ENCODE measurements at regions of chr3 and their contacts with region 1.

Region 1: GRCh38 chr3:4711689-4711992 is 218.5 kb downstream of the ITPR1 start:
- DNase-seq: no peak
- ATAC-seq: no peak
- H3K4me3 ChIP-seq: no peak overlapping the region
- H3K4me3 Mint-ChIP-seq: no peak overlapping the region
- H3K27ac ChIP-seq: no peak overlapping the region
- H3K27ac Mint-ChIP-seq: peak overlapping the region in 1 of 2 donors; percentile 10
- H3K4me1 ChIP-seq: no peaks in the 10 kb centered on the region
- H3K4me1 Mint-ChIP-seq: peaks cover 3 to 7% of the 10 kb centered on the region in 2 donors
- H3K27me3 ChIP-seq: no peaks in the 10 kb centered on the region
- H3K27me3 Mint-ChIP-seq: no peaks in the 10 kb centered on the region
- CTCF ChIP-seq: peak; percentile 23

Region 2: GRCh38 chr3:4687167-4687566 is 24.5 kb before region 1 on chr3:
- intact Hi-C with region 1: no loop called
- DNase-seq: no peak
- ATAC-seq: no peak
- H3K4me3 ChIP-seq: no peak overlapping the region
- H3K4me3 Mint-ChIP-seq: no peak overlapping the region
- H3K27ac ChIP-seq: no peak overlapping the region
- H3K27ac Mint-ChIP-seq: no peak overlapping the region
- H3K4me1 ChIP-seq: peaks cover 16% of the 10 kb centered on the region
- H3K4me1 Mint-ChIP-seq: peaks cover 14 to 26% of the 10 kb centered on the region in 2 donors
- H3K27me3 ChIP-seq: no peaks in the 10 kb centered on the region
- H3K27me3 Mint-ChIP-seq: no peaks in the 10 kb centered on the region
- CTCF ChIP-seq: no peak

Region 3: DNA sequence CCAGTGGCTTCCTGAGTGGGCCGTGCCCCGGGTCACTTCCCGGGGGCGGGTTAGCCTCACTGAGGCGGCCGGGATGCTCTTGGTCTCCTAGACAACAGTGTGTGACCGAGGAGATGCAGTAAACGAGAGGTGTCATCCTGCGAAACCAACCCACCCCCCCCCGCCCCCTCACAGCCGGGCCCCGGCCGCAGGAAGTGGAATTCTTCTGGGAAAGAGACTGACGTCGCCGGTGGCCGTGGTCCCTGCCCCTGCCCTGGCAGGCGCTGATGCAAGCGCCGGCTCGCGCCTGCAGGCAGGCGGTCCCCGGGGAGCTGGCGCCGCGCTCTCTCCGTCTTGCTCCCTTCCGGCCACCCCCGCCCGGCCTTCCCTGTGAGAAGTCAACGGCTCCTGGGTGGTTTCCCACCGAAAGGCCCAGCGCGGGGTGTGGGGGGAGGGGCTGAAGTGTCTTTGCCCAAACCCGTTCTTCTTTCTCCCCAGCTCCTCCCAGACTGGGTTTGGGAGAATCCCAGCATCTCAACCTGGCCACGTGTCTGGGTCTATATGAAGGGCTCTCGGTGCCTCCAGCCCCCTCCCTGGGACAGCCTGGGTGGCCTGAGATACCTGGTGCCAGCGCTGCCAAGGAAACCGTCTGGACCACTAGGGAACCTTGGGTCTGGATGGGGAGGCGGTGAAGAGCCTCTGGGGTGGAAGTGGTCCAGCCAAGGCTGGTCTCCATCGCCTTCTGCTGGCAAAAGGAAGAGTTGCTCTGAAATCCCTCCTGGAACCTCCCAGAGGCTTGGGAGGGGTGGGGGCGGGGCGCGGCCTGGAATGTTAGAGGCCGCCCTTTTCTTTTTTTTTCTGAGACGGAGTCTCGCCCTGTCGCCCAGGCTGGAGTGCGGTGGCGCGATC is 314.9 kb after region 1 on chr3:
- intact Hi-C with region 1: loop called (anchors 1 kb)
- DNase-seq: peak; percentile 73 to 82
- ATAC-seq: peak; percentile 79 to 91 (median 86)
- H3K4me3 ChIP-seq: peak overlapping the region; percentile 75
- H3K4me3 Mint-ChIP-seq: peak overlapping the region; percentile 89
- H3K27ac ChIP-seq: peak overlapping the region; percentile 84
- H3K27ac Mint-ChIP-seq: peak overlapping the region; percentile 86 to 92
- H3K4me1 ChIP-seq: peaks cover 17% of the 10 kb centered on the region
- H3K4me1 Mint-ChIP-seq: peaks cover 9 to 15% of the 10 kb centered on the region in 2 donors
- H3K27me3 ChIP-seq: no peaks in the 10 kb centered on the region
- H3K27me3 Mint-ChIP-seq: peaks cover 0 to 2% of the 10 kb centered on the region in 2 donors
- CTCF ChIP-seq: peak; percentile 61

Region 4: DNA sequence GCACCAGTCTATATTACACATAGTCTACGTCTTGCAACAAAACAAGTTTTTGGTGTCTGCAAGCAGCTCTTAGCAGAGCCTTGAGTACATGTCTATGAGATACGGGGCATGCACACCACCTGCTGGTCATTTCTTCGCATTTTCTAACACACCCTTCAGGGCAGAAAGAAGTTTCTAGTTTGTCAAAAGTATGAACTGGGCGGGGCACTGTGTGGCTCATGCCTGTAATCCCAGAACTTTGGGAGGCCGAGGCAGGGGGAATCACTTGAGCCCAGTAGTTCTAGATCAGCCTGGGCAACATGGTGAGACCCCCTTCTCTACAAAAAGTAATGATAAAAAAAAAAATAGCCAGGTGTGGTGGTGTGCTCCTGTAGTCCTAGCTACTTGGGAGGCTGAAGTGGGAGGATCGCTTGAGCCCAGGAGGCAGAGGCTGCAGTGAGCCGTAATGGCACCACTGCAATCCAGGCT is 346.2 kb after region 1 on chr3:
- intact Hi-C with region 1: loop called (anchors 1 kb)
- DNase-seq: peak; percentile 58 to 89
- ATAC-seq: peak; percentile 95 to 98 (median 96)
- H3K4me3 ChIP-seq: no peak overlapping the region
- H3K4me3 Mint-ChIP-seq: no peak overlapping the region
- H3K27ac ChIP-seq: no peak overlapping the region
- H3K27ac Mint-ChIP-seq: no peak overlapping the region
- H3K4me1 ChIP-seq: peaks cover 32% of the 10 kb centered on the region
- H3K4me1 Mint-ChIP-seq: peaks cover 17 to 31% of the 10 kb centered on the region in 2 donors
- H3K27me3 ChIP-seq: no peaks in the 10 kb centered on the region
- H3K27me3 Mint-ChIP-seq: peaks cover 4 to 7% of the 10 kb centered on the region in 2 donors
- CTCF ChIP-seq: peak; percentile 79